Activated CD8-positive, alpha-beta T cell treated with anti-CD3 and anti-CD28 coated beads for 36 hours (primary cell): ENCODE measurements at regions of chr20 and their contacts with region 1.

Region 1: DNA sequence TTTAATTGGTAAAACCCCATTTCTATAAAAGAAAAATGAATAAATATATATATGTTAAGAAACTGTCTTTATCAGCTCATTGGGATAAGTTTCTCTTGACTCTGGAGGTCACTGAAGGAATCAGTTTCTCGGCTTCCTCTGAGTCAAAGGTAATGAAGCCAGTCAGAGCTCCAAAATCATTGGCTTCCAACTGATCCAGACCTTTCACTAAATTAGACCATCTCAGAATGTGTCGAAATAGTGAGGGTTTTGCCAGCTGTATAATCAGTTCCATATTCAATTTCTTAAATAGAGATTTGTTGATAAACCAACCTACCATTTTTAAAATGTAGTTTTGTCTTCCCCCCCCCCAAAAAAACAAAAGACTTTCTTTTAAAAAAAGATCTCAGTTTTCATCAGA is 60.5 kb upstream of the SRSF6 start:
- DNase-seq: no peak
- ATAC-seq: no peak
- H3K4me3 Mint-ChIP-seq: no peak overlapping the region
- H3K27ac Mint-ChIP-seq: no peak overlapping the region
- H3K4me1 Mint-ChIP-seq: no peaks in the 10 kb centered on the region
- H3K27me3 Mint-ChIP-seq: peaks cover 5% of the 10 kb centered on the region
- CTCF ChIP-seq: no peak

Region 2: DNA sequence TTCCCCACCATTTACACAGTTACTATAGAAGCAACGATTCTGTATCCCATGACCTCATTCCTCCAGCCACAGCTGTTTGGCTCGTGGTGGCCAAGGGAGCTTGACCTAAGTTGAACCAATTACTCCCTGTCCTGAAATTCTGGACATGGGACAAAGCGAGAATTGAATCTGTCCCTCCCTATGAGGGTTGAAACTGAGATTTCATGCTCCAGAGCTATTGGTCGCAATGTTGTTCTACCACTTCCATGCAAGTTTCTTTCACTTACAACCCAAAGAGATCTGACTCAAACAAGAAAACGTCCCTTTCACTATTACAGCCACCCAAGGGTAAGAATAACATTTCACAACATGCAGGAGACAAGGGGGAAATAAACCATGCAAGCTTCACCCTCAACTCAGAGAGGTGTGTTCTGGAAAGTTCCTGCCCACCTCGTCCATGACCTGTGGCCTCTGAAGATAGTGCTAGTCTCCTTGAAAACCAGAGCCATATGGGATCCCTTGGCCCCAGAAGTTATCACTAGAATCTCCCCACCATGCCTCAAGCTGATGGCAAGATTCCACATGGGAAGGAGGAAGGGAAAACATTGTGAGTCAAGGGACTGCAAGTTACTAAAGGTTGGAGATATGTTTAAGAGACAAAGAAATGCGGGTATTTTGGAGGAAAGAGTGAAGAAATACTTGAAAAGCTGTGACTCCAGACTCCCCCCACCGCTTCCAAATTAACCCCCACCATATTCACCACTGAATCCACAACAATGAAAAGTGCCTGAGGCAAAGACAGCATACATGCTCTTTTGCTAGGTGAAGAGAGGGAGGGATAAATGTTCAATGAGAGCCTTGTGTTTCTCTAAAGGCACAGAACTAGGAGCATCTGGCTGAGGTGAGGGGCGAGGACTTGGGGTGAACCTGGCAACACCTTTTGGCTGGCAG is 13.9 kb before region 1 on chr20:
- CTCF ChIA-PET with region 1: no interaction called
- POLR2A ChIA-PET with region 1: no interaction called
- intact Hi-C with region 1: no loop called
- DNase-seq: no peak
- ATAC-seq: no peak
- H3K4me3 Mint-ChIP-seq: no peak overlapping the region
- H3K27ac Mint-ChIP-seq: no peak overlapping the region
- H3K4me1 Mint-ChIP-seq: no peaks in the 10 kb centered on the region
- H3K27me3 Mint-ChIP-seq: peaks cover 12% of the 10 kb centered on the region
- CTCF ChIP-seq: no peak

Region 3: DNA sequence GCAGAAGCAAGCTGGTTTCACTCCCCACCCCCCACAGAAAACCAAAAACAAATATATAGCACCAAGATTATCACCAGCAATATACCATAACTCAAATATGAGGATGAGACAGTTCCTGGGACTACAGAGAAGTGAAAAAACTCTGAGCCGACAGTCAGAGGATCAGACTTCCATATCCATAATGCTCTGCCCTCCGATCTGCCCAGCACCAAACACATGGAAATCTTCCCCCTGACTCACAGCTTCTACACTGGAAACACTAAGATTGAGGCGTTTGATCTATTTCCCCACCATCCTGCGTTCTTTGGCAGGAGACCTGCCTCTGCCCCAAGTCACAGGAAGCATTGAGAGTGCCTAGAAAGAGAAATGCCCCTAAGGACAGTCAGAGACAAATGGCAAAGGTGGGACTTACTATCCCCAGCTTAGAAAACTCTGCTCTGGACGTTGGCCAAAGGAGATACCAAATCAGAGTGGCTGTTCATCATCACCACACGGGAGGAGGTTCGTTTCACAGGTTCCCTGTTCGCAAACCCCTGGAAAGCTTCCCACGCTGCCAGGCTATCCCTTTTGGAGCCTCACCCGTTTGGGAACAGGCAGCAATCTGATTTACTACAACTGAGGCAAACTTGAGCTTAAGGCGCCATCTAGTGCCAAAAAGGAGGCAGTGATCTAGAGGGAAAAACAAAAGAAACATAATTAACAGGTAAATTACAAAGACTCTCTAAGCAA is 11.9 kb after region 1 on chr20:
- CTCF ChIA-PET with region 1: interaction called, 13 read pairs
- POLR2A ChIA-PET with region 1: no interaction called
- intact Hi-C with region 1: no loop called
- DNase-seq: peak; percentile 9
- ATAC-seq: no peak
- H3K4me3 Mint-ChIP-seq: no peak overlapping the region
- H3K27ac Mint-ChIP-seq: no peak overlapping the region
- H3K4me1 Mint-ChIP-seq: no peaks in the 10 kb centered on the region
- H3K27me3 Mint-ChIP-seq: peaks cover 48% of the 10 kb centered on the region
- CTCF ChIP-seq: peak; percentile 70

Region 4: GRCh38 chr20:43430265-43431133 is 33.4 kb after region 1 on chr20:
- CTCF ChIA-PET with region 1: no interaction called
- POLR2A ChIA-PET with region 1: no interaction called
- intact Hi-C with region 1: no loop called
- DNase-seq: no peak
- ATAC-seq: no peak
- H3K4me3 Mint-ChIP-seq: no peak overlapping the region
- H3K27ac Mint-ChIP-seq: no peak overlapping the region
- H3K4me1 Mint-ChIP-seq: no peaks in the 10 kb centered on the region
- H3K27me3 Mint-ChIP-seq: peaks cover 14% of the 10 kb centered on the region
- CTCF ChIP-seq: no peak